HepG2 (cell line): ENCODE measurements at regions of chr10 and their contacts with region 1.

Region 1: DNA sequence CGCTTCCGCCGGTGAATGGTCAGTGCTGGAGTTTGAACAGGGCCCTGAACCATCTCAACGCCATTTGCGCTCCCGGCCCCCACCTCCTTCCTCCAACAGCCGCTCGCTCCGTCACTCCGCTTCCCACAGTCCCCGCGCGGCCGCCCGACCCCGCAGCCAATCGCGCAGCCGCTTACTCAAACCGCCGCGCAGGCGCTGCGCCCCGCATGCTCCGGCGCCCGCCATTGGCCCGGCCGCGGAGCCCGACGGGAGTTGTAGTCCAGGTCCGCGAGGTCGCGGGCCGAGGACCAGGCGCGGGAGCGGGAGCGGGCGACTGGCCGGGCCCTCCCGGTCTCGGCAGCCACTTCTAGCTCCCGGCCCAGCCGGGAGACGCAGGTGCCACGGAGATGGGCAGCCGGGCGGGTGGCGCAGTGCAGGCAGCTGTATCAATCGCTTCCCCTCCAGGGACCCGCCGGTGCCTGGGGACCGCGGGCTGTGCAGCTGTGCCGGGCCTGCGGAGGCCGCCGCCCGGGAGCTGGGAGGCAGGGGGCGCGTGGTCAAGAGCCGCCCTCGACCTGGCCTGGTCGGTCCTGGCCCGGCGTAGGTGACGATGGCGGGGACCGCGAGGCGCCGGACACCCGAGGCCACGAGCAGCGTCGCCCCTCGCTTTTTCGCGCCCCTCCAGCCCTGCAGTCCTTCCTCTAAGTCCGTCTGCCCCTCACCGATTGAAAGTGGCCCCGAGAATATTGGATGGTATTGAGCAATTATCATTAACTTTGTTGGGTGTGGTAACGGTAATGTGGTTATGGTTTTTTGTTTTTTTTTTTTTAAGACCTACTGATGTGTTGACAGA is at the start of gene WAPL:
- DNase-seq: peak; percentile 87
- ATAC-seq: peak; percentile 94
- H3K4me3 ChIP-seq: peak within 1 kb of the TSS; percentile 73 to 99 (median 79)
- H3K27ac ChIP-seq: peak within 1 kb of the TSS; percentile 87
- H3K4me1 ChIP-seq: peaks cover 58% of the 10 kb centered on the region
- H3K27me3 ChIP-seq: no peaks in the 10 kb centered on the region; a peak in 1 of 5 replicates
- CTCF ChIP-seq: peak; percentile 28; the same call in 1 of the 2 replicates
- EP300 ChIP-seq: no peak
- POLR2A ChIP-seq: peak; percentile 60 to 77; a peak in 3 of 4 replicates
- RAD21 ChIP-seq: peak; percentile 44
- total RNA-seq, gene WAPL: 43.5 and 64.9 TPM in 2 replicates

Region 2: DNA sequence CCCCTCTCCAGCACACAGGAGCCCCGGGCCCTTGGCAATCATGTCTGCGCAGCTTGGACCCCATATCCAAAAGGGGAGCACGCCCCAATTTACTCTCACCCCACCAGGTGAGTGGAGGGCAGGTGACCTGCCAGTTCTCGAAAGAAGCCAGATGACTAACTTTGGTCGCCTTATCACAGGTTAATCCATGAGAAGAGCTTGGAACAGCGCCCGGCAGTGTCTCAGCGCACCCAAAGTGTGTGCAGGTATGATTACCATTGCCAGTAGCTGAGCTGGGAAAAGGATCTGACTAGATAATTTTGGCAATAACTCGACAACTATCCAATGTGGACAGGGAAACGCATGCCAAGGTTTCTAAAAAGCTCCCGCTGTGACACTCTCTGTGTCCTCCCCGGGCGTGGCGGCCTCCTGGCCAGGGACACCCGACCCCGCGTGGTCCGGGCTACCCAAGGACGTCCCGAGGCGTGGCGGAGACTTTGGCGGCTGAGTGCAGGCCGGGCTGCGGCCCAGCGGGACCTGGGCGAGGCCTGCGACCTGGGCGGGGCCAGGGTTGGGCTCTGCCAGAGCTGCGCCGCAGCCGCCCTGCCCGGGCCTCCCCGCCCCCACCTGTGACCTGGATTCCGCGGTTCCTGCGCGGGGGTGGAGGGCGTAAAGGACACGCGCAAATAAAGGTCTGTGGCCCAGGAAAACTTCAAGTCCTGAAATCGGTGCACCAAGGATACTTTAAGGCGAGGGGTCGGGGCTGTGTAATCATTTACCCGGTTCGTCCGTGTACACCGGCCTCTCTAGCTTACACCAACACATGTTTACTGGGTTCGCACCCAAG is 13.4 kb after region 1 on chr10:
- CTCF ChIA-PET with region 1: no interaction called
- POLR2A ChIA-PET with region 1: interaction called, 13 read pairs
- in situ Hi-C with region 1: no loop called
- intact Hi-C with region 1: no loop called
- DNase-seq: peak; percentile 38
- ATAC-seq: peak; percentile 95
- H3K4me3 ChIP-seq: peak overlapping the region; percentile 74 to 81 (median 79)
- H3K27ac ChIP-seq: no peak overlapping the region
- H3K4me1 ChIP-seq: peaks cover 24% of the 10 kb centered on the region
- H3K27me3 ChIP-seq: peaks cover 0 to 1% of the 10 kb centered on the region in 2 experiments; a peak in 1 of 5 replicates
- CTCF ChIP-seq: no peak
- EP300 ChIP-seq: no peak; a peak in 1 of 4 replicates
- POLR2A ChIP-seq: peak in 1 of 2 experiments; percentile 58; a peak in 2 of 4 replicates
- RAD21 ChIP-seq: no peak